ENCODE measurements at regions of chr9 and their contacts with region 1.

Region 1: GRCh38 chr9:126860077-126860756 is at the start of gene ZBTB34:
- DNase-seq: peak; percentile 52
- H3K4me3 Mint-ChIP-seq: peak within 1 kb of the TSS; percentile 75
- H3K27ac Mint-ChIP-seq: peak within 1 kb of the TSS; percentile 66
- H3K4me1 Mint-ChIP-seq: peaks cover 28% of the 10 kb centered on the region
- H3K27me3 Mint-ChIP-seq: no peaks in the 10 kb centered on the region
- CTCF ChIP-seq: peak; percentile 99
- total RNA-seq, gene ZBTB34: 4.6 and 6.9 TPM in 2 replicates

Region 2: GRCh38 chr9:126460288-126460843 is 399.9 kb before region 1 on chr9:
- CTCF ChIA-PET with region 1: no interaction called
- POLR2A ChIA-PET with region 1: no interaction called
- intact Hi-C with region 1: no loop called
- DNase-seq: no peak
- H3K4me3 Mint-ChIP-seq: no peak overlapping the region
- H3K27ac Mint-ChIP-seq: no peak overlapping the region
- H3K4me1 Mint-ChIP-seq: no peaks in the 10 kb centered on the region
- H3K27me3 Mint-ChIP-seq: no peaks in the 10 kb centered on the region
- CTCF ChIP-seq: no peak

Region 3: GRCh38 chr9:126849591-126850225 is 10.5 kb before region 1 on chr9:
- CTCF ChIA-PET with region 1: interaction called, 18 read pairs
- POLR2A ChIA-PET with region 1: interaction called, 5 read pairs
- intact Hi-C with region 1: no loop called
- DNase-seq: no peak
- H3K4me3 Mint-ChIP-seq: no peak overlapping the region
- H3K27ac Mint-ChIP-seq: no peak overlapping the region
- H3K4me1 Mint-ChIP-seq: peaks cover 5% of the 10 kb centered on the region
- H3K27me3 Mint-ChIP-seq: peaks cover 10% of the 10 kb centered on the region
- CTCF ChIP-seq: no peak

Measured in MCF 10A (cell line).